ENCODE measurements at regions of chr1 and their contacts with region 1.

Region 1: GRCh38 chr1:25253911-25254310 is 6.7 kb upstream of the RSRP1 start:
- DNase-seq: no peak
- H3K4me3 ChIP-seq: no peak overlapping the region
- H3K27ac ChIP-seq: peak overlapping the region in 10 of 59 donors; percentile 6 to 50 (median 28)
- H3K27me3 ChIP-seq: no peaks in the 10 kb centered on the region
- CTCF ChIP-seq: no peak

Region 2: DNA sequence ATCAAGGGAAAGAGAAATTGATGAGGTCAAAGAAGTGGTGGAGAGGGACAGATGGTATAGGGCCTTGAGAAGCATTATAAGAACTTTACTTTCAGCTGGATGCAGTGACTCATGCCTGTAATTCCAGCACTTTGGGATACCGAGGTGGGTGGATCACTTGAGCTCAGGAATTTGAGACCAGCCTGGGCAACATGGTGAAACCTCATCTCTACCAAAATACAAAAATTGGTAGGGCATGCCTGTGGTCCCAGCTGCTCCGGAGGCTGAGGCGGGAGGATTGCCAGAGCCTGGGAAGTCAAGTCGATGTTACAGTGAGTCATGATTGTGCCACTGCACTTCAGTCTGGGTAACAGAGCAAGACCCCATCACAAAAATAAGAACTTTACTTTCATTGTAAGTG is 90.0 kb after region 1 on chr1:
- intact Hi-C with region 1: loop called in 1 of 2 experiments (anchors 10 kb)
- DNase-seq: peak in 1 of 10 donors; percentile 9
- H3K4me3 ChIP-seq: no peak overlapping the region
- H3K27ac ChIP-seq: peak overlapping the region in 1 of 59 donors; percentile 15
- H3K27me3 ChIP-seq: no peaks in the 10 kb centered on the region
- CTCF ChIP-seq: no peak

Measured in dorsolateral prefrontal cortex (tissue), 120 donors.